Activated CD8-positive, alpha-beta T cell treated with anti-CD3 and anti-CD28 coated beads, Interleukin-2, amount 10 ng/mL, durations not matched to agents 7 days and 5 days (primary cell): ENCODE measurements at regions of chr9 and their contacts with region 1.

Region 1: DNA sequence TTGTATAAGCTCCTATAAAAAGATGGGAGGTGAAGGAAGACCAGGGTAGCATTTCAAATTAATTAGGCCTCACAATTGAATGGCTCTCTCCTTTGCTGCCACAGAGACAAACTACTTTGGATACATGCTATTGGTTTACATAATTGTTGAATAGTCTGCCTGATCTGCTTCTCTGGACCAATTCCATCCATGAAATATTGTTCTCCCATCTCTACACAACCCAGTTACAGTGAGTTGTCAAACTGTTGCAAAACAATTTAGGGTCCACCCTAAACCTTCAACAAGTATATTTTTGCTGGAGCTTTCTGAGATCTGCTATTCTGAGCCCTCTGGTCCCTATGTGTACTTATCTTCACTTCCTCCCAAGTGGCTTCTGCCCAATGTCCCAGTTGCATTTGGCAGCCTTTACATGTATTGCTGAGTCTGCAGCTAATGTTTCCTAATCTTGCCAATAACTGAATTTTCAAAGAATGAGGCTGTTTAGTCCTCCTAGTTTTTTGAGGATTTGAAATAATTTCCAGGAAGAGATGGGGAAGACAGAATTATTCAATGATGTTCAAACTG is 38.9 kb downstream of the AGTPBP1 start:
- DNase-seq: no peak
- ATAC-seq: no peak
- H3K4me3 Mint-ChIP-seq: no peak overlapping the region
- H3K27ac Mint-ChIP-seq: no peak overlapping the region
- H3K4me1 Mint-ChIP-seq: peaks cover 15% of the 10 kb centered on the region
- H3K27me3 Mint-ChIP-seq: no peaks in the 10 kb centered on the region

Region 2: GRCh38 chr9:85522459-85523092 is 180.2 kb before region 1 on chr9:
- CTCF ChIA-PET with region 1: no interaction called
- POLR2A ChIA-PET with region 1: no interaction called
- DNase-seq: peak; percentile 43
- ATAC-seq: peak; percentile 77
- H3K4me3 Mint-ChIP-seq: peak overlapping the region; percentile 66
- H3K27ac Mint-ChIP-seq: no peak overlapping the region
- H3K4me1 Mint-ChIP-seq: peaks cover 12% of the 10 kb centered on the region
- H3K27me3 Mint-ChIP-seq: peaks cover 50% of the 10 kb centered on the region

Region 3: GRCh38 chr9:85640425-85640824 is 62.4 kb before region 1 on chr9:
- CTCF ChIA-PET with region 1: no interaction called
- POLR2A ChIA-PET with region 1: no interaction called
- DNase-seq: no peak
- ATAC-seq: no peak
- H3K4me3 Mint-ChIP-seq: no peak overlapping the region
- H3K27ac Mint-ChIP-seq: no peak overlapping the region
- H3K4me1 Mint-ChIP-seq: no peaks in the 10 kb centered on the region
- H3K27me3 Mint-ChIP-seq: no peaks in the 10 kb centered on the region

Region 4: DNA sequence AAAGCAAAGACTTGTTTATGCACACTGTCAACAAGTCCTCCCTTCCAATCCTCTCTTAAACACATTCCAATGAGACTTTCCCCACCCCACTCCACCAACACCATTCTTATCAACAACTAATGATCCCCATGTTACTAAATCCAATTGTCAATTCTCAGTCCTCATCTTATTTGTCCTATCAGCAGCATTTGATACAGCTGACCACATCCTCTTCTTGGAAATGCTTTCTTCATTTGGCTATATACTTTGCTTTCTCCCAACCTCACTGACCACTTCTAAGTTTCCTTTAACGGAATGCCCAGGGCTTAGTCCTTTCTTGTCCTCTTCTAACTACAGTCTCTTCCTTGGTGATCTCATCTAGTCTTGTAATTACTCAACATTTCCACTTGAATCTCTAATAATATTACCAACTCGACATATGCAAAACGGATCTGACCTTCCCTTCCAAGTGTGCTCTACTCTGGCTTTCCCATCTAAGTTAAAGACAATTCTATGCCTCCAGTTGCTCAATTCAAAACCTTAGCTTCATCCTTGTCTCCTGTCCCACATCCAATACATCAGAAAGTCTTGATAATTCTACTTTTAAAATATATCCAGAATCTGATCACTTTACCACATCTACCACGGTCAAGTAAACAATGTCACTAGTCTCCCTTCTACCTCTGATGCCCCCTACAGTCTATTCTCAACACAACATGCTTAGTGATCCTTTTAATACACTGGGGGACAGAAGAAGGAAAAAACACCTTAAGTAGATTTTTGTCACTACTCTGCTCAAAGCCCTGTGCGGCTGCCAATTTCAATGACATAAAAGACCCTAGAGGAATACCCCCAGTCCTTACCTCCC is 13.4 kb after region 1 on chr9:
- CTCF ChIA-PET with region 1: interaction called, 11 read pairs
- POLR2A ChIA-PET with region 1: no interaction called
- DNase-seq: no peak
- ATAC-seq: peak; percentile 19
- H3K4me3 Mint-ChIP-seq: no peak overlapping the region
- H3K27ac Mint-ChIP-seq: no peak overlapping the region
- H3K4me1 Mint-ChIP-seq: peaks cover 29% of the 10 kb centered on the region
- H3K27me3 Mint-ChIP-seq: no peaks in the 10 kb centered on the region

Region 5: GRCh38 chr9:85729882-85730281 is 27.1 kb after region 1 on chr9:
- CTCF ChIA-PET with region 1: no interaction called
- POLR2A ChIA-PET with region 1: no interaction called
- DNase-seq: no peak
- ATAC-seq: no peak
- H3K4me3 Mint-ChIP-seq: no peak overlapping the region
- H3K27ac Mint-ChIP-seq: no peak overlapping the region
- H3K4me1 Mint-ChIP-seq: peaks cover 52% of the 10 kb centered on the region
- H3K27me3 Mint-ChIP-seq: no peaks in the 10 kb centered on the region

Region 6: GRCh38 chr9:85741875-85742629 is 39.2 kb after region 1 on chr9 and contains the start of gene AGTPBP1:
- CTCF ChIA-PET with region 1: interaction called, 20 read pairs
- POLR2A ChIA-PET with region 1: no interaction called
- DNase-seq: peak; percentile 96
- ATAC-seq: peak; percentile 89
- H3K4me3 Mint-ChIP-seq: peak within 1 kb of the TSS; percentile 91
- H3K27ac Mint-ChIP-seq: peak within 1 kb of the TSS; percentile 95
- H3K4me1 Mint-ChIP-seq: peaks cover 45% of the 10 kb centered on the region
- H3K27me3 Mint-ChIP-seq: peaks cover 12% of the 10 kb centered on the region
- total RNA-seq, gene AGTPBP1: 32.6 to 35.7 TPM